ENCODE measurements at regions of chr3 and their contacts with region 1.

Region 1: GRCh38 chr3:32872487-32873382 is 54.9 kb downstream of the TRIM71 start:
- DNase-seq: no peak
- ATAC-seq: peak; percentile 13; the same call in 1 of the 3 replicates
- H3K4me3 ChIP-seq: no peak overlapping the region
- H3K27ac ChIP-seq: no peak overlapping the region
- H3K4me1 ChIP-seq: peaks cover 6% of the 10 kb centered on the region; the same call in 1 of the 2 replicates
- H3K27me3 ChIP-seq: no peaks in the 10 kb centered on the region
- CTCF ChIP-seq: no peak
- EP300 ChIP-seq: no peak
- POLR2A ChIP-seq: no peak
- RAD21 ChIP-seq: no peak

Region 2: DNA sequence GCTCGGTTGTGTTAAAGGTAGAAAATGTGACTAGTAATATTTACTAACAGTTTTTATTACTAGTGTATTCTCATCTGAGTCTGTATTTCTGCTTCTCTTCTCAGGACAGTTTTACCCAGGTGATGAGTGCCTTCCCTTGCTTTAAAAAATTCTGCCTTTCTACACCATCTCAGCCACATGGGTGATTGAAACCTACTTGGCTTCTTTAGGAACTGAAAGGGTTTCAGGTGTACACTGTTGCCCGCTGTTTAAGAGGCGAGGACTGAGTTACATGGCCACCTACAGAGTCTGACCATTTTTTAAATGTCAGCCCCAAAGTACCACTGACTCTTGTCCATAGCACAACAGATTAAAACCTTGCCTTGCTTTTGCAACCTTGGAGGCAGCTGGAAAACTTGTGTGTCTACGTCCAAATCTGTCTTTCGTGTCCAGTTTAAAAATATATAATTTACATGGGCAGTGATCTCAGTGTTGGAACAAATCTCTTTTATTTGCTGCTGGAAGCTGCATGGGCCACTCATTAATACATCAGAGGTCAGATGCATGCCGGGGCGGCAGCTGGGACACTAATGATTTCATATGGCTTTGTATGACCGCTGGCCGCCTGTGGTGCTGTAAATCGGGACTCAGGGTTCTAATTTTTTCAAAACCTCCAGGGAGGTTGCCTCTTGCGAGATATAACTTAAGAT is 10.3 kb before region 1 on chr3:
- CTCF ChIA-PET with region 1: interaction called, 11 read pairs
- POLR2A ChIA-PET with region 1: interaction called, 13 read pairs
- RAD21 ChIA-PET with region 1: no interaction called
- SMC1A ChIA-PET with region 1: interaction called, 6 read pairs
- in situ Hi-C with region 1: no loop called
- intact Hi-C with region 1: no loop called
- DNase-seq: no peak
- ATAC-seq: peak; percentile 38; the same call in 2 of the 3 replicates
- H3K4me3 ChIP-seq: no peak overlapping the region
- H3K27ac ChIP-seq: no peak overlapping the region
- H3K4me1 ChIP-seq: no peaks in the 10 kb centered on the region
- H3K27me3 ChIP-seq: no peaks in the 10 kb centered on the region; a peak in 1 of 4 replicates
- CTCF ChIP-seq: no peak
- EP300 ChIP-seq: no peak
- POLR2A ChIP-seq: no peak
- RAD21 ChIP-seq: no peak

Region 3: DNA sequence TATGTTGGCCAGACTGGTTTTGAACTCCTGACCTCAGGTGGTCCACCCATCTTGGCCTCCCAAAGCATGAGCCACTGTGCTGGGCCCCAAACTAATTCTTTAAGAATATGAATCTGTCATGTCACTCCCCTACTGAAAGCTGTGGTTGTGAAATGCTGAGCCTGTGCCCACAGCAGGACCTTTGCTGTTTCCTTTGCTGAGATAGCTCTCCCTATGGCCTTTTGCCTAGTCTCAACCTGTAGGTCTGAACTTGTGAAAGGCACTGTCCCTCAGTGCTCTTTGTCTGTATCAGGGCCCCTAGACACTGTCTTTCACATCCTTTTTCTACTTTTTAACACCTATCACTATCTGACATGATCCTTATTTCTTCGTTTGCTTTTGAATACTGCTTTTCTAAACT is 16.0 kb after region 1 on chr3:
- CTCF ChIA-PET with region 1: interaction called, 11 read pairs
- POLR2A ChIA-PET with region 1: interaction called, 6 read pairs
- RAD21 ChIA-PET with region 1: interaction called, 11 read pairs
- SMC1A ChIA-PET with region 1: interaction called, 44 read pairs
- in situ Hi-C with region 1: no loop called
- intact Hi-C with region 1: no loop called
- DNase-seq: peak; percentile 72
- ATAC-seq: peak; percentile 94
- H3K4me3 ChIP-seq: no peak overlapping the region
- H3K27ac ChIP-seq: no peak overlapping the region
- H3K4me1 ChIP-seq: peaks cover 18% of the 10 kb centered on the region
- H3K27me3 ChIP-seq: no peaks in the 10 kb centered on the region
- CTCF ChIP-seq: no peak
- EP300 ChIP-seq: peak; percentile 15 to 18; a peak in 1 of 4 replicates
- POLR2A ChIP-seq: no peak
- RAD21 ChIP-seq: no peak

Region 4: DNA sequence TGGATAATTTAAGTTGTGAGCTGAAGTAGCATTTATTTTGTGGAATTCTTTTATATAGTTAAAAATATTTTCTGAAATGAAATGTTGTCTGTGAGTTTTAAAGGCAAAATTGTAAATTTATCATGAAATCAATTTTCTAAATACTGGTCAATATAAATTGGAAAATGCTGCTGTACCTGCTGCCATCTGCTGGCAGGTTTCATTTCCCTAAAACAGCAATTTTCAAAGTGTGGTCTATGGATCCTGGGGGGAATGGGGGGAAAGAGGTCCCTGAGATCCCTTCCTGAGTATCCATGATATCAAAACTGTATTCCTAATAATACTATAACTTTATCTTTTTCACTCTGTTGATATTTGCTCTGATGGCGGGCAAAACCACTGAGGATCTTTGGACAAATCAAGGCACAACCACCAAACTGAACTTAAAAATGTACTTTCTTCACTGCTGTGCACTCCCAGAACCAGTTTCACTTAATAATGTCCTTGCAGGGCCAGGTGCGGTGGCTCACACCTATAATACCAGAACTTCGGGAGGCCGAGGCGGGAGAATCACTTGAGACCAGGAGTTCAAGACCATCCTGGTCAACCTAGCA is 61.5 kb after region 1 on chr3:
- CTCF ChIA-PET with region 1: interaction called, 34 read pairs
- POLR2A ChIA-PET with region 1: no interaction called
- RAD21 ChIA-PET with region 1: interaction called, 3 read pairs
- SMC1A ChIA-PET with region 1: interaction called, 5 read pairs
- in situ Hi-C with region 1: no loop called
- intact Hi-C with region 1: loop called (anchors 2 kb)
- DNase-seq: no peak
- ATAC-seq: peak; percentile 68
- H3K4me3 ChIP-seq: no peak overlapping the region
- H3K27ac ChIP-seq: no peak overlapping the region
- H3K4me1 ChIP-seq: no peaks in the 10 kb centered on the region
- H3K27me3 ChIP-seq: no peaks in the 10 kb centered on the region; a peak in 1 of 4 replicates
- CTCF ChIP-seq: peak; percentile 59 to 73 (median 70)
- EP300 ChIP-seq: no peak
- POLR2A ChIP-seq: no peak
- RAD21 ChIP-seq: peak; percentile 80